Common myeloid progenitor, CD34-positive (primary cell): ENCODE measurements at regions of chr2 and their contacts with region 1.

Region 1: DNA sequence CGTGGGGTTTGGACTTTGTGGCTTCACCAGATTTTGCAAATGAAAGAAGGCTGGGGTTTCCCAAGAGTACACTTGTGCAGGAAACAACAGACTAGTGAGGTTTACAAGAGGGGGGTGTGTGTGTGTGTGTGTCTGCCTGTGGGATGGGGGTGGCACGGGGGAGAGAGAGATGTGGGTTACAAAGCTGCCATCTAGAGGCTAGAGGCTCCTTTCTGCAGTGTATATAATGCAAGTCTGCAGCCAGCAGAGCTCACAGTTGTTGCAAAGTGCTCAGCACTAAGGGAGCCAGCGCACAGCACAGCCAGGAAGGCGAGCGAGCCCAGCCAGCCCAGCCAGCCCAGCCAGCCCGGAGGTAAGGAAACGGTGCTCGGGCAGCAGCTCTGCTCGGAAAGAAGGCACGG is at the start of gene ACKR3:
- DNase-seq: peak; percentile 84 to 95 (median 95)
- H3K4me3 ChIP-seq: peak within 1 kb of the TSS in 6 of 7 experiments; percentile 14 to 85 (median 70)
- H3K27ac ChIP-seq: no peak within 1 kb of the TSS
- H3K4me1 ChIP-seq: peaks cover 8 to 31% (median 28%) of the 10 kb centered on the region in 4 experiments
- H3K27me3 ChIP-seq: no peaks in the 10 kb centered on the region

Region 2: DNA sequence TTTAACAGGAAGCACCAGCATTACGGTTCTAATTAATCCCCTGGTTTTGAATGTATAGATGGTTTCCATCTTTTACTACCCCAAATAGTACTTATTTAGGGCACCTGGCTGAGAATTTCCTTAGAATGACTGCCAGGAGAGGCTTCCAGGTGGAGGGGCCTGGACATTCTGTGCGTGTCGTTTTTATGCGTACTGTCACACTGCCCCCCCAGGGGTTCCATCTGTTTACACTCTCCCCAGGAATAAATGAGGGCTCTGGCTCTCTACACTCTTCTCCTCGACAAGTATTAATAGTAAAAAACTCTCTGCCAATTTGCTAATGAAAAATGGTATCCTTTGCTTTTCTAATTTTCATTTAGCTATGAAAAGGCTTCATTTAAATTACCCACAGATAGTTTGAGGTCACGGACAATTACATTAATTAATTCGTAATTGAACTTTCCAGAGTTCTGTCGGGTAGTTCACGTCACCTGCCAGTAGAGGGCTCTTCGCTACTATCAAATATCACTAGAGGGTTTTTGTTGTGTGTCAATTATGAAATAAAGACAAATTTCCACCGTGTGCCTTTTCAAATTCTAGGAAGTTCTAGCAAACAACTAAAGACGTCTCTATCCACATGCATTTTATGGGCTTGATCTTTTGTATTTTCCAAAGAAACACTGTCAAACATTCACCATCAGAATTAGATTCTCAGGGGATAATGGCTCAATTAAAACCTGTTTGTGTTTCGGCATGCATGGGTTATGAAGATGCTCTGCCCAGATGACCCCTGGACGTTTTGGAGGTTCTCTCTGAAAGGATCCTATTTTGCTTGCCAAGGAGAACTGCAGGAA is 216.6 kb before region 1 on chr2:
- CTCF ChIA-PET with region 1: interaction called, 11 read pairs
- POLR2A ChIA-PET with region 1: no interaction called
- DNase-seq: peak; percentile 31 to 66 (median 54)
- H3K4me3 ChIP-seq: no peak overlapping the region
- H3K27ac ChIP-seq: no peak overlapping the region
- H3K4me1 ChIP-seq: no peaks in the 10 kb centered on the region
- H3K27me3 ChIP-seq: peaks cover 0 to 7% (median 3%) of the 10 kb centered on the region in 5 experiments

Region 3: GRCh38 chr2:236498369-236498768 is 71.2 kb before region 1 on chr2:
- CTCF ChIA-PET with region 1: interaction called, 19 read pairs
- POLR2A ChIA-PET with region 1: no interaction called
- DNase-seq: no peak
- H3K4me3 ChIP-seq: no peak overlapping the region
- H3K27ac ChIP-seq: no peak overlapping the region
- H3K4me1 ChIP-seq: peaks cover 0 to 5% (median 0%) of the 10 kb centered on the region in 4 experiments
- H3K27me3 ChIP-seq: no peaks in the 10 kb centered on the region

Region 4: DNA sequence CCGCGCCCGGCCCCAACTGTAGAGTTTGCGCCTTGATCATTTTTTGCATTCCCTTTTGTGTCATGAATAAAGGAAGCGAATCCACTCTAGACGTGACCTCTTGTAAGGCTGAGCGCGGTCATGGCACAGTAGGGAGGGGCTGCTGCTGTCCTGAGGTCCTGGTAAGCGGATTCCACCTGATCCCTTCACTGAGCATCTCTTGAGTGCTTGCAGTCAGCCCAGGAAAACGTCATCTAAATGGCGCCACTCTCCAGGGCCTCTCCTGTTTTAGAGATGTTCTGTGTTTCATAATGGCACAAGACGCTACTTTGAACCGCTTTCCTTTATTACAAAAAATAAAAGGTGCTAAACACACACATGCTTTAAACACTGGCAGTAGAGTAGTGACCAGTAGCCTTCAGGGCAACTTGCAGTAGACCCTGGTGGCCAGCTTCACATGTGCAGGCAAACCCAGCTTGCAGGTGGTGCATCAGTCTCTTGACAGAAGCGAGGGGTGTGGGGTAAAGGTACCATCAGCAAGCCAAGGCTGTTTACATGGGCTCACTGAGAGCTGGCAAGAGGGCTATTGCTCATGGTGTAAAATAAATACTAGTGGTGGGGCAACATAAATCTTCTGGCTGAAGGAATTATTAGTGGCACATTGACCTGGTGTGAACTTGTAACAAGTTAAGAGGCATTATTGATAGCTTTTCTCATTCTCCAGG is 43.0 kb before region 1 on chr2:
- CTCF ChIA-PET with region 1: interaction called, 12 read pairs
- POLR2A ChIA-PET with region 1: interaction called, 3 read pairs
- DNase-seq: no peak
- H3K4me3 ChIP-seq: no peak overlapping the region
- H3K27ac ChIP-seq: no peak overlapping the region
- H3K4me1 ChIP-seq: peaks cover 0 to 13% (median 5%) of the 10 kb centered on the region in 4 experiments
- H3K27me3 ChIP-seq: no peaks in the 10 kb centered on the region

Region 5: DNA sequence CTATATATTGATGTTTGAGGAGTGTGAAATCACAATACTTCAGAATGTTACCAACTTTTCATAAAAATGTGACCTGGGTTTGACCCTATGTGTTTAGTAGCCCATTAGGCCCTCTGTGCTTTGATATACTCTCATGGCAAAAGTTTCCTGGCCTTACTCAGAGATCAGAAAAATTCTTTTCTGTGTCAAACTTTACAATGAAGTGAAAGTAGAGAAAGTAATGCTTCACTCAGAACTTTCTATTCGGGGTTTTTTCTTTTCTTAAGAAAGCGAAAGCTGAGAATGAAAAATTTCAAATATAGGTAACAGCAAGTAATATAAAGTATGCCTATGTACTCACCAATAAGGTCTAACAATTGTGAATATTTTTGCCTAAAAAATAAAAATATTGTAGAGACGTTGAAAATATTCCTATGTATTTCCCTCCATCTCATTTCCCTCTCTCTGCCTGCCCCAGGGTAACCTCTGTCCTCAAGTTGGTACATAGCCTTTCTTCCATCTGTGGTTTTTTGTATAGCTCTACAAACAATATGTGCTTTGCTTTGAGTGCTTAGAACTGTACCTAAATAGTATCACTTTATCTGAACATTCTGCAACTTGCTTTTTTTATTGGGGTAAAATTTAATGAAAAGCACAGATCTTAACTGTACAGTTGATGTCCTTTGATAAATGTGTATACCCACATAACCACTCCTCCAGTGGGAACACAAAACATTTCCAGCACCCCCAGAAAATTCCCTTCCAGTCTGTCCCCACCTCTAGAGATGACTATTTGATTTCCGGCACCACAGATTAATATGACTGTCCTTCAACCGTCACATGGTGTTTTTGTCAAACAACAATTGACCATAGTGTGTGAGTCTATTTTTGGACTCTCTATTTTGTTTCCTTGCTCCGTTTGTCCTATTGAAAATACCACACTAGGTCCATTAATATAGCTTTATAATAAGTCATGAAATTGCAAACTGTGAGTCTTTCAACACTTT is 10.3 kb before region 1 on chr2:
- CTCF ChIA-PET with region 1: interaction called, 38 read pairs
- POLR2A ChIA-PET with region 1: interaction called, 3 read pairs
- DNase-seq: no peak
- H3K4me3 ChIP-seq: peak overlapping the region in 1 of 7 experiments; percentile 11
- H3K27ac ChIP-seq: no peak overlapping the region
- H3K4me1 ChIP-seq: peaks cover 0 to 32% (median 10%) of the 10 kb centered on the region in 4 experiments
- H3K27me3 ChIP-seq: no peaks in the 10 kb centered on the region

Region 6: GRCh38 chr2:236593956-236594355 is 24.4 kb after region 1 on chr2:
- CTCF ChIA-PET with region 1: no interaction called
- POLR2A ChIA-PET with region 1: no interaction called
- DNase-seq: peak in 2 of 3 donors; percentile 5 to 50
- H3K4me3 ChIP-seq: no peak overlapping the region
- H3K27ac ChIP-seq: no peak overlapping the region
- H3K4me1 ChIP-seq: no peaks in the 10 kb centered on the region
- H3K27me3 ChIP-seq: peaks cover 0 to 3% (median 0%) of the 10 kb centered on the region in 5 experiments